ENCODE measurements at regions of chr6 and their contacts with region 1.

Region 1: DNA sequence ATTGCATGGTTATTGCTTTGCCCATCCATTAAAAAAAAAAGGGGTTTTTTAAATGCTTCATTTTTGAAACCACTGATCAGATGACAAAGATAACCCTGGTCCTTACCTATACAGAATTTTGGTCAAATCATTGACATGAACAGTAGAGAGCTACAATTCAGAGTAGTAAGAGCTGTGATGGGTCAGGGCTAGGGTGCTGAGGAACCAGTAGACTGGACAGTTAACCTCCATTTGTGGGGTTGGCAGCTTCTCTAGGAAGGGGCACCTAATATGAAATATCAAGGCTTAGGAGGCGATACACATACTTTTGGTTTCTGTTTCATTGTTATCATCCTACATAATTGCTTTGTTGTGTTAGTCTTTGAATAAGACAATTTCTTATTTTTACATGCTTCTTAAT is 55.1 kb downstream of the ORC3 start:
- DNase-seq: no peak
- ATAC-seq: peak; percentile 79
- H3K4me3 ChIP-seq: no peak overlapping the region
- H3K27ac ChIP-seq: peak overlapping the region; percentile 63; the same call in 1 of the 2 replicates
- H3K4me1 ChIP-seq: peaks cover 2% of the 10 kb centered on the region; the same call in 1 of the 2 replicates
- H3K27me3 ChIP-seq: no peaks in the 10 kb centered on the region
- CTCF ChIP-seq: no peak
- EP300 ChIP-seq: no peak
- POLR2A ChIP-seq: no peak
- RAD21 ChIP-seq: no peak

Region 2: DNA sequence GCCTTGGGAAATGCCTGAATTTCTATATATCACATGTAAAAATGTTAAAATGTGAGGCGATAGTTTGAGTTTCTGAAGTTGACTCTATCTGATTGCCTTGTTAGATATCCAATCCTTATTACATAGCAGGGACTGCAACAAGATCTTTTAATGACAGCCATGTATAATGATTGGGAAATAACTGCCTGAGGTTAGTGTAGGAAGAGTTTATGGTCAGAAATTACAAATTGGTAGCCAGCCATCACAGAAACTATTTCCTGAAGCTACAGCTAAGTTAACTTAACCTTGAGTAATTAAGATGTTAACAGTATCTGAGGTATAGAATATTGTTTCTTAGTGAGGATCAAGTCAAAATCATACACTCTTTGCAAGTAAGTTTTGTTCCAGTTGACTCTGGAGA is 15.9 kb after region 1 on chr6:
- CTCF ChIA-PET with region 1: interaction called, 3 read pairs
- POLR2A ChIA-PET with region 1: interaction called, 4 read pairs
- RAD21 ChIA-PET with region 1: no interaction called
- SMC1A ChIA-PET with region 1: interaction called, 10 read pairs
- in situ Hi-C with region 1: no loop called
- intact Hi-C with region 1: no loop called
- DNase-seq: no peak
- ATAC-seq: no peak
- H3K4me3 ChIP-seq: no peak overlapping the region
- H3K27ac ChIP-seq: no peak overlapping the region
- H3K4me1 ChIP-seq: 0 out of 2 replicates have a peak, but pooled peaks cover 6% of the 10 kb centered on the region
- H3K27me3 ChIP-seq: no peaks in the 10 kb centered on the region
- CTCF ChIP-seq: no peak
- EP300 ChIP-seq: no peak
- POLR2A ChIP-seq: no peak
- RAD21 ChIP-seq: no peak